Head of caudate nucleus (tissue), 42 donors: ENCODE measurements at regions of chr2 and their contacts with region 1.

Region 1: GRCh38 chr2:227655454-227655853 is 11.2 kb upstream of the SCYGR5 start:
- DNase-seq: no peak

Region 2: GRCh38 chr2:227766373-227766883 is 111.0 kb after region 1 on chr2:
- intact Hi-C with region 1: loop called (anchors 5 kb)
- DNase-seq: peak; percentile 70 to 91 (median 81)

Region 3: GRCh38 chr2:227782804-227783203 is 127.3 kb after region 1 on chr2:
- intact Hi-C with region 1: no loop called
- DNase-seq: peak in 1 of 42 donors; percentile 2

Region 4: DNA sequence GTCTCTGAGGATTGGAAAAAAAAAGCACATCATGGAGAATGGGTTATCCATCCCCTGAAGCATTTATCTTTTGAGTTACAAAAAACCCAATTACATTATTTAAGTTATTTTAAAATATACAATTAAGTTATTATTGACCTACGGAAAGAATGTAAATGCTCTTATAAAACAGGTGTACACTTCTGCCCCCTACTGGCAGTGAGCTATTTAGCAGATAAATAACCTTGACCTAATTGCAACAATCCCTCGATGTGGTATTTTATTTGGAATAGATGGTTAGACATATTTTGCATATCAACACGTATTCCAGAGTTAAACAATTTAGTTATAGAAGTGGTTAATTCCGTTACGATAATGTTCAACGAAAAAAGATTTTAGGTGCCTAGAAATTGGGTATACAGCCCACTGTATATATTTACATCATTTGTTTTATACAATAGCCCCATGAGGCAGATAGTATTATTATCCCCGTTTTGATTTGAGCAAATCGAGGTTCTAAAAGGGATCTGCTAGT is 206.8 kb after region 1 on chr2:
- intact Hi-C with region 1: loop called (anchors 10 kb)
- DNase-seq: peak in 7 of 42 donors; percentile 13 to 74 (median 31)